PC-3 (cell line): ENCODE measurements at regions of chr2 and their contacts with region 1.

Region 1: DNA sequence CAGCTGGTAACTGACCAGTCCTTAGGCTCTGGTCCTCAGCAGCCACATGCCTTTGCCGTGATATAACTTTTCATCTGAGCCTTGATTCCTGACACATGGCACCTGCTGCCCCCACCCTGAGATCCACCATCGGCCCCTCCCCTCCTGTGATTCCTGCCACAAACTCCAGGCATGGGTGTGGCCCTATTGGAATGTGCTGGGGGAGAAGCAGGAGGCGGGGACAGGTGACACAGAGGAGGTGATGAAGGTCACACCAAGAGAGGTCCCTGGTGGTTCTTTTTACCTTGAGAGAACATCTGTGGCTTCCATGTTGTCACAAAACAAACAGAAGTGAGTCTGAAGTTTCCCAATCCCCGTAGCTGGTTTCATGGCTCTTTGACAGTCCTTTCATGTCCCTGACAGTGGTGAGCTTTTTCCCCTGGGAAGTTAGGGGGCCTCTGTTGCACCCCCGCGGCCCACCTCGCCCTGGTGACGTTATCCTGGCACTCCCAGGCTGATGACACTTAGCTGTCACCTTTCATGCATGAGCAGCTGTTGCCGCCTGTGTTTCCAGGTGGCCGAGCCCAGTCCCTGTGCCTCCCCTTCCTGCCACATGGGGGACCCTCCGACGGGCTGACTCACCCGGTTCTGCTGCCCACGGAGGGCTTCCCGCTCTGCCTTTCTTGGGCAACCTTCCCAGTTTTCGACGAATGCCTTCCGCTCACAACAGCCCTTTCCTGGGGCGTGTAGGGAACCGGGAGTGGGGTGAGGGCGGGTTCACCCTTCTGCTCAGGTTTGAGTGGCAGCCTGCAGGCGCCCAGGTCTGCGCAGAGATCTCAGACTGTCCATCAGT is 66.3 kb upstream of the GLI2 start:
- DNase-seq: peak; percentile 79
- ATAC-seq: peak; percentile 75
- H3K4me3 ChIP-seq: no peak overlapping the region
- H3K27ac ChIP-seq: peak overlapping the region; percentile 58
- H3K4me1 ChIP-seq: peaks cover 18% of the 10 kb centered on the region
- H3K27me3 ChIP-seq: no peaks in the 10 kb centered on the region
- CTCF ChIP-seq: peak; percentile 53; the same call in 1 of the 2 replicates

Region 2: DNA sequence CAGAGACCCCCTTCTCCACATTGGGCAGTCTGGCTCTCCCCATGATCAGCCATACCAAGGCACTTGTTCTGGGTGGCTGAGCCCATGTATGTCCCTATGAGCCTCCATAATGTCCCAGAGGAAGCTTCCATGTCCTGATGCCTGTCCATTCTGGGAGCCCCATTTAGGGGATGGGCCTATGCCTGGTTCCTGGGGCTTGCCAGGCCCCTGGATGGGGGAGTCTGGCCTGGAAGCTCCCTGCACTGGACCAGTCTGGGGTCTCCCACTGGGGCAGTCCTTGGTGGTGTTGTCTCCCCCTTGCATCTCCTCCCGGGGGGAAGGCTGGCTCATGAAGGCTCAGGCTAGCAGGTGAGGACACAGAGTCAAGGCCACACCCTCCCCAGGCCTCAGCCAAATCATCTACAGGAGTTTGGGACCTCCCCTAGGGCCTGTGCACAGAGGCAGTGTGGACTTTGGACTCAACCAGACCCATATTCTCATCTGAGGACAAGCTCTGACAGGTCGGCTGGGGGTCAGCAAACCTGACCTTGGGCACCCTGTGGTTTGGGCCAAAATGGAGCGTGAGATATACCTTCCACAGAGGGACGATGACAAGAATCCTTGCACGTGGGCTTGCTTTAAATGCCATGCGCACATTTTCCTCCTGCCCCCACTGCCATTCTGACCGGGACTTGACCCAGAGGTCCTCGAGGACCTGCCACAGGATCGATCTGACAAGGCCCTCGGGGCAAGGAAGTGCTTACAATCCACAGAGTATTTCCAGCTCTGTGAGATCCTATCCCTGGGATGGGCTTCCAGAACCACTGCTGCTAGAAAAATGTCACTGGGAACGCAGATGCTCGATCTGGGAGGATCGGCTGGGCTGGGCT is 284.6 kb before region 1 on chr2:
- CTCF ChIA-PET with region 1: no interaction called
- POLR2A ChIA-PET with region 1: no interaction called
- intact Hi-C with region 1: no loop called
- DNase-seq: no peak
- ATAC-seq: no peak
- H3K4me3 ChIP-seq: no peak overlapping the region
- H3K27ac ChIP-seq: no peak overlapping the region
- H3K4me1 ChIP-seq: no peaks in the 10 kb centered on the region
- H3K27me3 ChIP-seq: no peaks in the 10 kb centered on the region
- CTCF ChIP-seq: no peak

Region 3: DNA sequence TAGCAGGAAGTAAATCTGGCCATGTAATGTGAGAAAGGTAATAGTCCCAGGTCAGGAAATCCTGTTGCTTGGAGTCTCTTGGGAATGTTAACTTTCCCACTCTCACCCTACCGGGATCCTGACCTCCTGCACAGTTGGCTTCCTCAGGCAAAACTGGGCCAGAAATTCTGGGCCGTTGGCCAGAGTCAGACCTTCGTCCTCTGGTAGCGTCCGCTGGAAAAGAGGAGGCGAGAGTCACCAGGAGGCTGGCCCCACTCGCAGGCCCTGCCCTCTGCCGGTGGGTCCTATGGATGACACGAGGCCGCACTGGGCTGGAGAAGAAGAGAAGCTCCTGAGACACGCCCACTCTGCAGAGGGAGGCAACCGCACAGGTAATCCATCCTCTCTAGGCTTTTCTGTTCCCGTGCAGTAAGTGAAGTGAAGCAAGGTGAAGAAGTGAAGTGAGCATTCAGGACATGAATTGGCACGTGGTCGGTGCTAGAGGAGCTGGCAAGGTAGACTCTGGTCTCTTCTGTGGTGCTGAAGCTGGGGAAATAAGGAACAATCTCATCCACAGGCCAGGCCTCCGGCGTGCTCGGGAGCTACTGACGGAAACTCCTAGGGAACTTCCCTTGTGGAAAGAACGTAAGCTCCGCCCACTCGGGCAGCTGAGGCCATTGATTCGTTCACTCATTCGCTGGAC is 116.4 kb before region 1 on chr2:
- CTCF ChIA-PET with region 1: no interaction called
- POLR2A ChIA-PET with region 1: no interaction called
- intact Hi-C with region 1: loop called (anchors 2 kb)
- DNase-seq: peak; percentile 98
- ATAC-seq: peak; percentile 99
- H3K4me3 ChIP-seq: peak overlapping the region; percentile 53
- H3K27ac ChIP-seq: peak overlapping the region; percentile 83
- H3K4me1 ChIP-seq: peaks cover 19% of the 10 kb centered on the region
- H3K27me3 ChIP-seq: no peaks in the 10 kb centered on the region
- CTCF ChIP-seq: peak; percentile 87

Region 4: DNA sequence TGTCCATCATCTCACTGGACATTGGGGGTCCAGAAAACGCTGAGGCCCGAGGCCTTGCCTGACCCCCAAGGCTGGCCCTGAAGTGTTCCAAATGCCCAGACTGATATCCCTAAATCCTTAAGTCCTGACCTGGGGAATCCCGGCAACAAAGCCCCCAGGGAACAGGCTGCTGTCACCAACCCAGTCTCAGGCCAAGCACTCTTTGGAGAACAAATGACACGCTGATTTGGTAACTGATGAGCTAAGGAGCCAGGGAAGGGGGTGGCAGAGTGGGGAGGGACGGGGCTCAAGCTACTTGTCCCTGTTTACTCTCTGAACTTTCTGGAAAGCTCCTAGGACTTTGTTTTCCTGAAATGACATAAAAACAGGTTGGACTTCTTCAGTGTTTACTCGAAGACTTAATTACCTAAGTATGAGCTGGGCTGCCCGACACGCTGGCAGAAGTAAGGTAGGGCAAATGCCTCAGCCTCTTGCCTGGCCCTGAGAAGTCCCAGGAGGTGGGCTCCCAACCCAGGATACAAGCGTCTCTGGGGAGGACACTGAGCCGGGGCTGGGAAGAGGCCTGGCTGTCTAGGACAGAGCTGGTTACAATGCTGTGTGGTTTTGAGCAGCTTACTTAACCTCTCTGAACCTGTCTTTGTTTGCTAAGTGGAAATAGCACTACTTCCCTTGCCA is 39.2 kb before region 1 on chr2:
- CTCF ChIA-PET with region 1: no interaction called
- POLR2A ChIA-PET with region 1: no interaction called
- intact Hi-C with region 1: loop called (anchors 2 kb)
- DNase-seq: peak; percentile 57
- ATAC-seq: peak; percentile 37
- H3K4me3 ChIP-seq: no peak overlapping the region
- H3K27ac ChIP-seq: no peak overlapping the region
- H3K4me1 ChIP-seq: peaks cover 27% of the 10 kb centered on the region
- H3K27me3 ChIP-seq: no peaks in the 10 kb centered on the region
- CTCF ChIP-seq: no peak